ENCODE measurements at regions of chr1 and their contacts with region 1.

Region 1: GRCh38 chr1:51433269-51433971 is 85.6 kb downstream of the EPS15 start:
- DNase-seq: no peak
- H3K4me3 ChIP-seq: no peak overlapping the region
- H3K27ac ChIP-seq: no peak overlapping the region
- H3K4me1 ChIP-seq: no peaks in the 10 kb centered on the region; a peak in 1 of 7 replicates
- H3K27me3 ChIP-seq: no peaks in the 10 kb centered on the region
- CTCF ChIP-seq: no peak
- EP300 ChIP-seq: no peak
- POLR2A ChIP-seq: no peak
- RAD21 ChIP-seq: no peak

Region 2: GRCh38 chr1:51385776-51386175 is 47.6 kb before region 1 on chr1:
- CTCF ChIA-PET with region 1: no interaction called
- POLR2A ChIA-PET with region 1: no interaction called
- DNase-seq: no peak
- H3K4me3 ChIP-seq: no peak overlapping the region
- H3K27ac ChIP-seq: no peak overlapping the region
- H3K4me1 ChIP-seq: no peaks in the 10 kb centered on the region
- H3K27me3 ChIP-seq: no peaks in the 10 kb centered on the region
- CTCF ChIP-seq: no peak
- EP300 ChIP-seq: no peak
- POLR2A ChIP-seq: no peak
- RAD21 ChIP-seq: no peak

Region 3: DNA sequence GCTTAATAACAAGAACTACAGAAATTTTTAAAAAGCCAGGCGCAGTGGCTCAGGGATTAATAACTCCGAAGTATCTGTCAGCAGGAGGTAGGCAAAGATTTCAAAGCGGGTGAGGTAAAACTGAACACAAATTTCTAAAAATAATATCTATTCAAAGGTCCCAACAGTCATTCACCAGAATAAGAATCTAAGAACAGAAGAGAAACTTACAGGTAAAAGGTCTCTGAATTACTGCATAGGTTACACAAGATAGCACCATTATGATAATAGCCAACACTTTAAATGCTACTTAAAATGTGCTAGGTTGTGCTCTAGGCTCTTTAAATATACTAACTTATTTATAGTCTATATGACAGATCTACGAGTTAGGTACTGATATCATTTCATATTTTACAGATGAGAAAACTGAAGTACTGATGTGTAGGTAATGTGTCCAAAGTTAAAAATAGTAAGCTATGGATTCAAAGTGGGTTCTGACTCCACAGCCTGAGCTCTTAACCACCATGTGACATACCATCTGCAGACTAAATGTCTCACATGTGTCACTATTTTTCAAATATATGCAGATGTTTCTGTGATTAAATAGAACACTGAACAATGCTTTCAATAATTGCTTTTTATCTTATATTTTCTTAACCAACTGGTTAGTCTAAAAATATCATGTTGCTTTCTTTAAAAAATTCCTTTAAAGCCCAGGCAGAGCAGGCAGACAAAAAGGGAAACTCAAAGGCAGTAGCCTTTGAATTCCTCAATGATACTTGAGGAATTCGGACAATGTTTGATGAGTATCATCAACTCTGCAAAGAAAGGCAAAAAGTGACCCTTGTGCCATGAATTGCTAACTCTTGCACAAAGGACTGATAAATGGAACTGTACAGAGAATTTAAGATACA is 22.6 kb before region 1 on chr1:
- CTCF ChIA-PET with region 1: no interaction called
- POLR2A ChIA-PET with region 1: no interaction called
- DNase-seq: no peak
- H3K4me3 ChIP-seq: no peak overlapping the region
- H3K27ac ChIP-seq: no peak overlapping the region
- H3K4me1 ChIP-seq: no peaks in the 10 kb centered on the region
- H3K27me3 ChIP-seq: no peaks in the 10 kb centered on the region
- CTCF ChIP-seq: no peak
- EP300 ChIP-seq: no peak
- POLR2A ChIP-seq: no peak
- RAD21 ChIP-seq: no peak

Region 4: DNA sequence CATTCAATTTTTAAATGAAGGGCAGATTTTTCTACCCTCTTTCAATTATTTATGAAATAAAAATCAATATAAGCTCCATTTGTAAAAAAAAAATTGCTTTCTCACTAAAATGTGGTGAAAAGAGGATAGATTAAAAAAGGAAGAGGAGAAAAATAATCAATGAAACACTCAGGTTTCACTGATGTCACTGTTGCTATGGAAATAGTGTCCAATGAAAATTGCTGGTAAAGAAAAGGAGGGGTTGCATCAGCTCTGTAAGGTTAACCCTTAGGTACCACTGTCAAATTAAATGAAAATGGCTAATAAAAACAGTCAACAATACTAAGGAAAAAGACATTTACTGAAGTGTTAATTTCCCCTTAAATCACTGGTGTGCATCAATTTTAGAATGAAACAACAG is 11.5 kb before region 1 on chr1:
- CTCF ChIA-PET with region 1: interaction called, 3 read pairs
- POLR2A ChIA-PET with region 1: interaction called, 16 read pairs
- DNase-seq: no peak
- H3K4me3 ChIP-seq: peak overlapping the region in 3 of 4 experiments; percentile 14 to 75 (median 41); a peak in 5 of 8 replicates
- H3K27ac ChIP-seq: peak overlapping the region; percentile 74; the same call in 1 of the 2 replicates
- H3K4me1 ChIP-seq: peaks cover 0 to 8% (median 7%) of the 10 kb centered on the region in 4 experiments; a peak in 4 of 7 replicates
- H3K27me3 ChIP-seq: no peaks in the 10 kb centered on the region
- CTCF ChIP-seq: no peak
- EP300 ChIP-seq: no peak
- POLR2A ChIP-seq: no peak
- RAD21 ChIP-seq: no peak

Region 5: DNA sequence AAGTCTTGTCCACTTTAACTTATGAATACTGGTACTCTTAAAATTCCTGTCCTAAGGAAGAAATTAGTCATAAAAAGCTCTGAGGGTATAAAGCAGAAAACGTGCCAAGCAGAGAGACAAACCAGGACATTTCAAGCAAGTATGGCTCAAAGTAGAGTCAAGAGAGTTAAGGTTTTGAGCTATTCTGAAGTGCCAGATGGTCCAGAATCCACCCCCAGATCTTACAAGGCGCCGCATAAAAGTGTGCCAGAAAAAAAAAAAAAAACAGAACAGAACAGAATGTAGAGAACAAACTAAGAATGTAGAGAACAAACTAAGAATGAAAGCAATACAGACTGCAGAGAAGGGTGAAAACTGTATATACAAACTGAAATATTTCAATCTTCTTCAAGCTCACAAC is 73.1 kb after region 1 on chr1:
- CTCF ChIA-PET with region 1: no interaction called
- POLR2A ChIA-PET with region 1: no interaction called
- DNase-seq: no peak
- H3K4me3 ChIP-seq: no peak overlapping the region
- H3K27ac ChIP-seq: no peak overlapping the region
- H3K4me1 ChIP-seq: no peaks in the 10 kb centered on the region
- H3K27me3 ChIP-seq: no peaks in the 10 kb centered on the region
- CTCF ChIP-seq: no peak
- EP300 ChIP-seq: no peak
- POLR2A ChIP-seq: no peak
- RAD21 ChIP-seq: no peak

Measured in H1 (cell line).